ENCODE measurements at regions of chrX and their contacts with region 1.

Region 1: GRCh38 chrX:74550295-74550802 is 64.1 kb downstream of the RLIM start:
- DNase-seq: peak; percentile 85
- ATAC-seq: peak; percentile 98
- H3K4me3 ChIP-seq: peak overlapping the region in 2 of 5 experiments; percentile 11 to 18
- H3K4me3 Mint-ChIP-seq: peak overlapping the region; percentile 74
- H3K27ac ChIP-seq: no peak overlapping the region
- H3K27ac Mint-ChIP-seq: peak overlapping the region; percentile 71
- H3K4me1 ChIP-seq: peaks cover 0 to 4% of the 10 kb centered on the region in 2 donors
- H3K4me1 Mint-ChIP-seq: peaks cover 2% of the 10 kb centered on the region
- H3K27me3 ChIP-seq: no peaks in the 10 kb centered on the region
- H3K27me3 Mint-ChIP-seq: no peaks in the 10 kb centered on the region
- CTCF ChIP-seq: peak; percentile 94

Region 2: GRCh38 chrX:74015379-74016019 is 534.9 kb before region 1 on chrX:
- CTCF ChIA-PET with region 1: no interaction called
- POLR2A ChIA-PET with region 1: no interaction called
- intact Hi-C with region 1: loop called (anchors 10 kb)
- DNase-seq: peak; percentile 67
- ATAC-seq: no peak
- H3K4me3 ChIP-seq: no peak overlapping the region
- H3K4me3 Mint-ChIP-seq: no peak overlapping the region
- H3K27ac ChIP-seq: no peak overlapping the region
- H3K27ac Mint-ChIP-seq: no peak overlapping the region
- H3K4me1 ChIP-seq: no peaks in the 10 kb centered on the region
- H3K4me1 Mint-ChIP-seq: no peaks in the 10 kb centered on the region
- H3K27me3 ChIP-seq: no peaks in the 10 kb centered on the region
- H3K27me3 Mint-ChIP-seq: no peaks in the 10 kb centered on the region
- CTCF ChIP-seq: peak; percentile 75

Region 3: GRCh38 chrX:74291964-74292807 is 258.2 kb before region 1 on chrX:
- CTCF ChIA-PET with region 1: no interaction called
- POLR2A ChIA-PET with region 1: no interaction called
- intact Hi-C with region 1: loop called (anchors 2 kb)
- DNase-seq: peak; percentile 92
- ATAC-seq: peak; percentile 88
- H3K4me3 ChIP-seq: peak overlapping the region; percentile 78 to 87 (median 80)
- H3K4me3 Mint-ChIP-seq: peak overlapping the region; percentile 99
- H3K27ac ChIP-seq: peak overlapping the region; percentile 77 to 81
- H3K27ac Mint-ChIP-seq: peak overlapping the region; percentile 98
- H3K4me1 ChIP-seq: peaks cover 3 to 6% of the 10 kb centered on the region in 2 donors
- H3K4me1 Mint-ChIP-seq: peaks cover 18% of the 10 kb centered on the region
- H3K27me3 ChIP-seq: no peaks in the 10 kb centered on the region
- H3K27me3 Mint-ChIP-seq: no peaks in the 10 kb centered on the region
- CTCF ChIP-seq: no peak

Region 4: DNA sequence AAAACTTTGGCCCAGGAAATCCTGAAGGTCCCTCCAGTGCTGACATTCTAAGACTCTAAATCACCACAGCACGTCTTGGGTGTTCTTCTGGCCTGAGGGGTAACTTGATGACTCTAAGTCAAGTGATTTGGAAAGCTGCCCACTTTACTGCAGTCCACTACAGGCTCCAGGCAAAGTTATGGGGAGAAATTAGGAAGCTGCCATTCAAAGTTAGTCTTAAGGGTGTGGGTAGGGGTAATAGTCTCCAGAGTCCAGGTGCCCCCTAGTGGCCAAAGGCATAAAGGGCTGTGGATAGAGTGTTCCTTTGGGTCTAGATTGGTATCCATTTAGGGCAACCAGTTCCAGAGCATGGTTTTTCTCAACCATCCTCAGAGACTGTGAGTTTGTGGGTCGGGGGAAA is 167.7 kb before region 1 on chrX:
- CTCF ChIA-PET with region 1: no interaction called
- POLR2A ChIA-PET with region 1: no interaction called
- intact Hi-C with region 1: loop called (anchors 1 kb)
- DNase-seq: peak; percentile 48
- ATAC-seq: peak; percentile 58
- H3K4me3 ChIP-seq: no peak overlapping the region
- H3K4me3 Mint-ChIP-seq: no peak overlapping the region
- H3K27ac ChIP-seq: no peak overlapping the region
- H3K27ac Mint-ChIP-seq: no peak overlapping the region
- H3K4me1 ChIP-seq: no peaks in the 10 kb centered on the region
- H3K4me1 Mint-ChIP-seq: no peaks in the 10 kb centered on the region
- H3K27me3 ChIP-seq: peaks cover 0 to 2% (median 0%) of the 10 kb centered on the region in 4 experiments
- H3K27me3 Mint-ChIP-seq: peaks cover 3% of the 10 kb centered on the region
- CTCF ChIP-seq: peak; percentile 72

Region 5: GRCh38 chrX:74492720-74493201 is 57.6 kb before region 1 on chrX:
- CTCF ChIA-PET with region 1: interaction called, 4 read pairs
- POLR2A ChIA-PET with region 1: no interaction called
- intact Hi-C with region 1: loop called (anchors 2 kb)
- DNase-seq: peak; percentile 19
- ATAC-seq: peak; percentile 24
- H3K4me3 ChIP-seq: no peak overlapping the region
- H3K4me3 Mint-ChIP-seq: no peak overlapping the region
- H3K27ac ChIP-seq: no peak overlapping the region
- H3K27ac Mint-ChIP-seq: no peak overlapping the region
- H3K4me1 ChIP-seq: no peaks in the 10 kb centered on the region
- H3K4me1 Mint-ChIP-seq: no peaks in the 10 kb centered on the region
- H3K27me3 ChIP-seq: no peaks in the 10 kb centered on the region
- H3K27me3 Mint-ChIP-seq: no peaks in the 10 kb centered on the region
- CTCF ChIP-seq: no peak

Region 6: DNA sequence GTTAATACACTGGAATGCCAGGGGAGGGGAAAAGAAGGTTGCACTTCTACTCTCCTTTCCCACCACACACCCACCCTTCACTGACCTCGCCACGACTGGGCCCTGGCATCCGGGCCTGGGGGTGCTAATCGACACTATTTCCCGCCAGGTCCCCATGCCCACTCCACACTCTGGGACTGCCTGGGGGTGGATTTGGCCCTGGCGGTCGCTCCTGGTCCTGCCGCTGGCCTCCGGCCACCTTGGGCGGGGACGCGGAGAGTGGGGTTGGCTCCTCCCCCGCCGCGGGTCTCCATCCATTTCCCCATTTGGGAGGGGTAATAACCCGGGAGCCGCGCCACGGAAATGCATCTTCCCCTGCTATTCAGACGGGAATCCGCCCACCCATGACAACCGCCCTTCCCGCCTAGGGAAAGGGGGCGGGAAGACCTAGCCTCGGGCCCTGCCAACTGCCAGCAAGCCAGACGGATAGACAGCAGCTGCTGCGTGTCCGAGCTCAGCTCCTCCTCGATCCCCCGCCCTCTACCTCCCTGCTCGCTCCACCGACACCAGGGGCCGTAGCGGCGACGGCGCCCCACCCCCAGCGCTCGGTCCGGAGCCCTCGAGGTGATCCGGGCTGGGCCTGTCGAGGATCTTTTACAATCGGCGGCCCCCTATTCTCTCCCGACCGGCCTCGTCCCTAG is 14.1 kb before region 1 on chrX:
- CTCF ChIA-PET with region 1: interaction called, 6 read pairs
- POLR2A ChIA-PET with region 1: no interaction called
- intact Hi-C with region 1: loop called (anchors 2 kb)
- DNase-seq: peak; percentile 50
- ATAC-seq: peak; percentile 70
- H3K4me3 ChIP-seq: peak overlapping the region; percentile 26 to 62 (median 54)
- H3K4me3 Mint-ChIP-seq: peak overlapping the region; percentile 86
- H3K27ac ChIP-seq: peak overlapping the region in 1 of 2 donors; percentile 51
- H3K27ac Mint-ChIP-seq: peak overlapping the region; percentile 37
- H3K4me1 ChIP-seq: peaks cover 5 to 14% of the 10 kb centered on the region in 2 donors
- H3K4me1 Mint-ChIP-seq: peaks cover 9% of the 10 kb centered on the region
- H3K27me3 ChIP-seq: no peaks in the 10 kb centered on the region
- H3K27me3 Mint-ChIP-seq: no peaks in the 10 kb centered on the region
- CTCF ChIP-seq: no peak

Region 7: GRCh38 chrX:74579597-74580198 is 29.3 kb after region 1 on chrX:
- CTCF ChIA-PET with region 1: no interaction called
- POLR2A ChIA-PET with region 1: no interaction called
- intact Hi-C with region 1: no loop called
- DNase-seq: no peak
- ATAC-seq: no peak
- H3K4me3 ChIP-seq: no peak overlapping the region
- H3K4me3 Mint-ChIP-seq: no peak overlapping the region
- H3K27ac ChIP-seq: no peak overlapping the region
- H3K27ac Mint-ChIP-seq: no peak overlapping the region
- H3K4me1 ChIP-seq: no peaks in the 10 kb centered on the region
- H3K4me1 Mint-ChIP-seq: no peaks in the 10 kb centered on the region
- H3K27me3 ChIP-seq: no peaks in the 10 kb centered on the region
- H3K27me3 Mint-ChIP-seq: no peaks in the 10 kb centered on the region
- CTCF ChIP-seq: no peak

Measured in B cell (primary cell).